Activated T-helper 2 cell treated with anti-CD3 and anti-CD28 coated beads, Interferon-gamma antibody, Interleukin-2, Interleukin-4, amounts not matched to agents 10 μg/mL and 5 μg/mL and 100 μg/mL, durations not matched to agents 14 hours and 24 hours and 36 hours (primary cell): ENCODE measurements at regions of chr7 and their contacts with region 1.

Region 1: DNA sequence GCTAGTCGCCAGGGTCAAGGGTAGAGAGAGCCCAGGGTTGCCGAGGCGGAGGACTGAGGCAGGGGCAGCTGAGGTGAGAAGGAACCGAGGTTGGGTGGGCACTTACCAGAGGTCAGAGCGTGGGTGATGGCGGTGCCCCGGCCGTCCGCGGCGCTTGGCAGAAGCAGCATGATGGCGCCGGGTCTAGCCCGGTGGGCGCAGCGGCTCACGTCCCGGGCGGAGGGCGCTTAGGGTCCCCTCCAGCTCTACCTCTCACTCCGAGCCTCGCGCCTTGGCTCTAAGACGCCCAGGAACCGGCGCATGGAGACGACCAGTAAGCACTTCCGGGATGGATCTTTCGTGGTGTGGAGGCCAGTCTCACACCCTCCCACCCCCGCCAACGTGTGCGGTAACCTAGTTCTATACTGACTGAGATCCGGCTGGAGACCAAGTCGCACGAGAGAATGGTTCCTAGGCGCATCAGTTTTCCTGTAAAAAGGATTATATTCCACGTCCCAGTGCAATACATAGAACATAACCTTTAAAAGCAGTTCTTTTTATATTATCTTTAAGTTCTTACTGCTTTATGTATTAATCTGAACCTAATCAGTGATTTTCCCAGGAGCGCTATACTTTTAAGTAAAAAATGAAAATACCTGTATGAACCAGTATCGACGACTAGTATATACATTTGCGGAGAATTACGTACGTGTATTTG is at the start of gene DNAJC2:
- DNase-seq: peak; percentile 81
- H3K4me3 Mint-ChIP-seq: peak within 1 kb of the TSS; percentile 99
- H3K27ac Mint-ChIP-seq: peak within 1 kb of the TSS; percentile 98
- H3K4me1 Mint-ChIP-seq: peaks cover 35% of the 10 kb centered on the region
- H3K27me3 Mint-ChIP-seq: no peaks in the 10 kb centered on the region
- total RNA-seq, gene DNAJC2: 49.2 and 51.8 TPM in 2 replicates

Region 2: GRCh38 chr7:103074519-103075336 is 269.9 kb before region 1 on chr7 and contains the starts of genes ARMC10 and FBXL13:
- intact Hi-C with region 1: loop called (anchors 2 kb)
- DNase-seq: peak; percentile 83
- H3K4me3 Mint-ChIP-seq: peak within 1 kb of the TSS; percentile 93
- H3K27ac Mint-ChIP-seq: peak within 1 kb of the TSS; percentile 90
- H3K4me1 Mint-ChIP-seq: peaks cover 26% of the 10 kb centered on the region
- H3K27me3 Mint-ChIP-seq: peaks cover 2% of the 10 kb centered on the region
- total RNA-seq, gene ARMC10: 46.9 and 49.1 TPM in 2 replicates
- total RNA-seq, gene FBXL13: 0.41 and 0.76 TPM in 2 replicates

Region 3: GRCh38 chr7:103148994-103149807 is 195.4 kb before region 1 on chr7 and contains the start of gene NAPEPLD:
- intact Hi-C with region 1: loop called (anchors 5 kb)
- DNase-seq: peak; percentile 70
- H3K4me3 Mint-ChIP-seq: peak within 1 kb of the TSS; percentile 97
- H3K27ac Mint-ChIP-seq: peak within 1 kb of the TSS; percentile 97
- H3K4me1 Mint-ChIP-seq: peaks cover 35% of the 10 kb centered on the region
- H3K27me3 Mint-ChIP-seq: no peaks in the 10 kb centered on the region
- total RNA-seq, gene NAPEPLD: 9.6 and 10.7 TPM in 2 replicates

Region 4: DNA sequence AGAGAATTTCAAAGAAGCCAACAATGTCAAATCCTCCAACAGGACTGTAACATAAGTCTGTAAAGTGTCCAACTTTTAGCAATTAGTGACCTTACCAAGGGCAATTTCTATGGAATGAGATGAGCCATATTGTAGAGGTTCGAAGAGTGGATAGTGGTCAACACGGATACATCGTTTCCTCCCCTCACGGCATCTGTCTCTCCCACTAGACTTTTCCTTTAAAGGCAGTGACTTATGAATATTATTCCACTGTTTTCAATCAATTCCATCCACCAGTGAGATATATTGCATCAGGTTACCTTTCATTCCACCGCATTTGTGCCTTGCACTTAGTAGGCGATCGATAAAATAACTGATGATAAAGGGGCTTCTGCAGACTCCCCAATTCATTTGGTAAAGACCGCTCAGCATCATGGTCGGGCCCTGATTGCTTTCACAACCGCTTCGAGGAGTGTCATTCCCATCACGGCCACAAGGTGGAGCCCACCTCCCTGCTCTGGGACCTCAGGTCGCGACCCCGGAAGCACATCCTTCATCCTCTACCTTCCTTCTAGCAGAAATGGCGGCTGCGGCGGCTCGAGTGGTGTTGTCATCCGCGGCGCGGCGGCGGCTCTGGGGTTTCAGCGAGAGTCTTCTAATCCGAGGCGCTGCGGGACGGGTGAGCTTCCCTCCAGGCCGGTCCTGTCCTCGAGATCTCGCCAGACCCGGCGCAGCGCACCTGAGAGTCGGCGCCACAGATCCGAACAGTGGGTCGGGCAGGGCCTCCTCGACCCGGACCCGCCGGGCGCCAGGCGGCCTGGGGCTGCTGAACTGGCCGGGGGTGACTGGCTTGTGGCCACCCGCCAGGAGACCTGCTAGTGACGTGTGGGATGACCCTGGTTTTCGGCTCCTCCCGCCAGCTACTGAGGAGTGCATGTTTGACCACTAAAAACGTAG is 47.4 kb before region 1 on chr7 and contains the start of gene PMPCB:
- intact Hi-C with region 1: loop called (anchors 5 kb)
- DNase-seq: peak; percentile 92
- H3K4me3 Mint-ChIP-seq: peak within 1 kb of the TSS; percentile 99
- H3K27ac Mint-ChIP-seq: peak within 1 kb of the TSS; percentile 92
- H3K4me1 Mint-ChIP-seq: peaks cover 23% of the 10 kb centered on the region
- H3K27me3 Mint-ChIP-seq: peaks cover 6% of the 10 kb centered on the region
- total RNA-seq, gene PMPCB: 69.2 and 71.5 TPM in 2 replicates

Region 5: DNA sequence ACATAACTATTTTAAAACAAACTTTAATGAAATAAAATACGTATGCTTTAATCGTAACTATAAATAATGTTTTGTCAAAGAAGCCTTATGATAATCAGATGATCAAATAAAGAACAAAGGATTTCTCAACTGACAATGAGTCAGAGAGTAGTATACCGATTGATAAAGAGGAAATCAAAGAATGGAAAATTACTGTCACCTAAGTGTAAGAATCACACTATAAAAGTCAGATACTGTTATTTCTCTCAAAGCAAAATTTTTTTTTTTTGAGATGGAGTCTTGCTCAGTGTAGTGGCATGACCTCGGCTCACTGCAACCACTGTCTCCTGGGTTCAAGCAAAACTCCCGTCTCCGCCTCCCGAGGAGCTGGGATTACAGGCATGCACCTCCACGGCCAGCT is 18.9 kb before region 1 on chr7:
- intact Hi-C with region 1: loop called (anchors 2 kb)
- DNase-seq: no peak
- H3K4me3 Mint-ChIP-seq: no peak overlapping the region
- H3K27ac Mint-ChIP-seq: peak overlapping the region; percentile 65
- H3K4me1 Mint-ChIP-seq: peaks cover 17% of the 10 kb centered on the region
- H3K27me3 Mint-ChIP-seq: no peaks in the 10 kb centered on the region

Region 6: GRCh38 chr7:103373866-103374643 is 29.5 kb after region 1 on chr7:
- intact Hi-C with region 1: no loop called
- DNase-seq: no peak
- H3K4me3 Mint-ChIP-seq: no peak overlapping the region
- H3K27ac Mint-ChIP-seq: no peak overlapping the region
- H3K4me1 Mint-ChIP-seq: peaks cover 13% of the 10 kb centered on the region
- H3K27me3 Mint-ChIP-seq: peaks cover 6% of the 10 kb centered on the region

Region 7: DNA sequence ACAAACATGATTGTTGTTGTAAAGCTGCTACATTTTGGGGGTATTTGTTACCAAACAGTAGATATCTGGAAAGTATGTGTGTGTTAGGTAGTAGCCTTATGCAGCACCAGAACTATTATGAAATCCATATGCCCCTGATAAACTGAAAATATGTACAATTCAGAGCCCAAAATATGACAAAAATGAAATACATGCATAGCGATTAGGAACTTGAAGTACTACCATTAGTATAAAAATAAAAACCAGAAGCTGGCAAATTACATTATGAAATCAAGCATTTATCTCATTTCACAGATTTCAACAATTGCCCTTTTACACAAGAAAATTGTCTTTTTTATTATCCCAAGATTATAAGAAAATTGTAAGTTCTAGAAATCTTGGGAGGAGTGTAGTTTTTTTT is 67.5 kb after region 1 on chr7:
- intact Hi-C with region 1: loop called (anchors 1 kb)
- DNase-seq: no peak
- H3K4me3 Mint-ChIP-seq: no peak overlapping the region
- H3K27ac Mint-ChIP-seq: no peak overlapping the region
- H3K4me1 Mint-ChIP-seq: no peaks in the 10 kb centered on the region
- H3K27me3 Mint-ChIP-seq: peaks cover 14% of the 10 kb centered on the region

Region 8: GRCh38 chr7:103613655-103614642 is 269.3 kb after region 1 on chr7:
- intact Hi-C with region 1: no loop called
- DNase-seq: no peak
- H3K4me3 Mint-ChIP-seq: no peak overlapping the region
- H3K27ac Mint-ChIP-seq: no peak overlapping the region
- H3K4me1 Mint-ChIP-seq: no peaks in the 10 kb centered on the region
- H3K27me3 Mint-ChIP-seq: no peaks in the 10 kb centered on the region

Region 9: GRCh38 chr7:104207731-104208420 is 863.3 kb after region 1 on chr7 and contains the start of gene ORC5:
- intact Hi-C with region 1: loop called (anchors 5 kb)
- DNase-seq: peak; percentile 72
- H3K4me3 Mint-ChIP-seq: peak within 1 kb of the TSS; percentile 94
- H3K27ac Mint-ChIP-seq: peak within 1 kb of the TSS; percentile 90
- H3K4me1 Mint-ChIP-seq: peaks cover 25% of the 10 kb centered on the region
- H3K27me3 Mint-ChIP-seq: peaks cover 12% of the 10 kb centered on the region
- total RNA-seq, gene ORC5: 25.0 and 28.3 TPM in 2 replicates